Dorsolateral prefrontal cortex (tissue), 120 donors: ENCODE measurements at regions of chr1 and their contacts with region 1.

Region 1: DNA sequence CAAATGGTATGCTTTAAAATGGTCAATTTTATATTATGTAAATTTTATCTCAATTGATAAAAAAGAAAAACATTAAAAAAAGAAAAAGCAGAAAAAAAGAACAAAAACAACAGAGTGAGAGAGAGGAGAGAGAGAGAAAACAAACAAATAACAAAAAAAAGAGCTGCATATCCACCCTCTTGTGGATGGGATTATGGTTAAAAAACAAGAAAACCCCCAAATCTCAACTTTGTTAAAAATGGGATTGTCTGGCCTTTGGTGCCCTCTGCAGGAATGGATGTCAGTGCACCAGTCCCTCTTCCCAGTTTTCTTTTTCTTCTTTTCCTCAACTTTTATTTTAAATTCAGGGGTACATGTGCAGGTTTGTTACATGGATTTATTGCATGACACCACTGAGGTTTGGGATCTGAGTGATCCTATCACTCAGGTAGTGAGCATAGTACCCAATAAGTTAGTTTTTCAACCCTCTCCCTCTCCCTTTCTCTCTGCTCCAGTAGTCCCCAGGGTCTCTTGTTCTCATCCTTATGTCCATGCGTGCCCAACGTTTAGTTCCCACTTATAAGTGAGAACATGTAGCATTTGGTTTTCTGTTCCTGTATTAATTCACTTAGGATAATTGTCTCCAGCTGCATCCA is 28.1 kb downstream of the RNF187 start:
- DNase-seq: no peak
- H3K4me3 ChIP-seq: no peak overlapping the region
- H3K27ac ChIP-seq: no peak overlapping the region
- H3K27me3 ChIP-seq: peaks cover 0 to 19% (median 0%) of the 10 kb centered on the region in 45 donors
- CTCF ChIP-seq: peak; percentile 57 to 93 (median 75)

Region 2: DNA sequence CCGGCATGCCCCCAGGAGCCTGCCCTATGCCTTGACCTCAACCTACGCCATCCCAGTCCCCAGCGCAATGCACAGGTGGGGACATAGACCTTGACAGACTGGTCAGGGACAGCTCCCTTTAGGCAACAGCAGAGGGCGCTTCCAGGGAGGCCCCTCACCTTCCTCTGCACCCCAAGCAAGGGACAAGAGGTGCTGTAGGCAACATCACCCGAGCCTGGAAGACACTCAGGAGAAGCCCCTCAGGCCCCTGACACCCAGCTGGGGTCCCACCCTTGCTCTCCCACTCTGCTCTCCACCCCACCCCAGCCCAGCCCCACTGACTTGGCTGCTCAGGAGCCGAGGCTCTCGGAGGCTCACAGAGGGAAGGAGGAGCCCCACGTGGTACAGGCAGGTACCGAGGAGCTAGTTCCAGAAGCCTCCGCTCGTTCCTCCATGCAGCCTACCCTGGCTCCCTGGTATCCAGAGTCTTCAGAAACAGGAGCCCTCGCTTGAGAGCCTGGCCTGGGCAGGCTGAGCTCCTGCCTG is 510.9 kb before region 1 on chr1:
- intact Hi-C with region 1: loop called in 1 of 2 experiments (anchors 5 kb)
- DNase-seq: peak in 3 of 10 donors; percentile 7 to 29 (median 8)
- H3K4me3 ChIP-seq: no peak overlapping the region
- H3K27ac ChIP-seq: no peak overlapping the region
- H3K27me3 ChIP-seq: peaks cover 3 to 87% (median 69%) of the 10 kb centered on the region in 45 donors
- CTCF ChIP-seq: peak in 9 of 56 donors; percentile 8 to 21 (median 11)

Region 3: GRCh38 chr1:228131766-228132165 is 383.6 kb before region 1 on chr1:
- intact Hi-C with region 1: loop called in 1 of 2 experiments (anchors 2 kb)
- DNase-seq: no peak
- H3K4me3 ChIP-seq: no peak overlapping the region
- H3K27ac ChIP-seq: no peak overlapping the region
- H3K27me3 ChIP-seq: peaks cover 0 to 10% (median 0%) of the 10 kb centered on the region in 45 donors
- CTCF ChIP-seq: no peak

Region 4: DNA sequence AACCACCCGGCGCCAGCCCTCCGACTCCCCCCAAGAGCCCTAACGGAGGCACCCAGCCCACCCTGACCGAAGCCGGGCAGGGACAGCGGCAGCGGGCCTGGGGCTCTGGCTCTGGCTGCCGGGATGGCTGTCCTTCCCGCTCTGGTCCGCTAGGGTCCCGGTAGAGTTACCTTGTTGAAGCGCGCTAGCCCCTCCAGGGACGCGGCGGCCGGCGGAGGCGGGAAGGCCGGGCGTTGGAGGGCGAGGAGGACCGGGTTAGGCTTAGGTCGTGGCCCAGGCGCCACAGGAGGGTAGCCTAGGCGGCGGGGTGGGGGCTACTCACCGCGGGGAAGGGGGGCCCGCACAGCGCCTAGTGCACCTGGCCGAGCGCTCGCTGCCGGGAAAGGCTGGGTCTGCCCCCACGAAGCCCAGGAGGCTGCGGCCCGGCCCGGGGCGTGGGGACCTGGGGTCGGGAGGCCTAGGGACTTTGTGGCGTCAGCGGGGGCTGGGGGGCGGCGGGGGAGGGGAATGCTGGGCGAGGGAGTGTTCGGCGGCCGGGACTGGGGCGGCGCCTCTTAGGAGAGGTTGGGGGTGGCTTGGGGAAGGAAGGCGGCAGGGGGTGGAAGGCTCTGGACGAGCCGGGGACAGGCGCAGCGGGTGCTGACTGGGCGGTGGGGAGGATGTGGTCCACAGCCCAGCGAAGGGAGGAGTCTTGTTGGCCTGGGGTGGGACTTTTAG is 98.9 kb before region 1 on chr1 and contains the start of gene TRIM17:
- intact Hi-C with region 1: no loop called
- DNase-seq: no peak
- H3K4me3 ChIP-seq: peak within 1 kb of the TSS; percentile 27 to 72 (median 60)
- H3K27ac ChIP-seq: peak within 1 kb of the TSS in 50 of 59 donors; percentile 19 to 90 (median 67)
- H3K27me3 ChIP-seq: peaks cover 0 to 38% (median 5%) of the 10 kb centered on the region in 45 donors
- CTCF ChIP-seq: peak in 5 of 56 donors; percentile 7 to 25 (median 18)
- total RNA-seq, gene TRIM17: 8.5 to 40.4 (median 21.4) TPM

Region 5: GRCh38 chr1:228555074-228555989 is 40.0 kb after region 1 on chr1:
- intact Hi-C with region 1: no loop called
- DNase-seq: peak in 1 of 10 donors; percentile 15
- H3K4me3 ChIP-seq: peak overlapping the region in 4 of 59 donors; percentile 15 to 34 (median 18)
- H3K27ac ChIP-seq: no peak overlapping the region
- H3K27me3 ChIP-seq: peaks cover 0 to 25% (median 0%) of the 10 kb centered on the region in 45 donors
- CTCF ChIP-seq: no peak